ENCODE measurements at regions of chr5 and their contacts with region 1.

Region 1: DNA sequence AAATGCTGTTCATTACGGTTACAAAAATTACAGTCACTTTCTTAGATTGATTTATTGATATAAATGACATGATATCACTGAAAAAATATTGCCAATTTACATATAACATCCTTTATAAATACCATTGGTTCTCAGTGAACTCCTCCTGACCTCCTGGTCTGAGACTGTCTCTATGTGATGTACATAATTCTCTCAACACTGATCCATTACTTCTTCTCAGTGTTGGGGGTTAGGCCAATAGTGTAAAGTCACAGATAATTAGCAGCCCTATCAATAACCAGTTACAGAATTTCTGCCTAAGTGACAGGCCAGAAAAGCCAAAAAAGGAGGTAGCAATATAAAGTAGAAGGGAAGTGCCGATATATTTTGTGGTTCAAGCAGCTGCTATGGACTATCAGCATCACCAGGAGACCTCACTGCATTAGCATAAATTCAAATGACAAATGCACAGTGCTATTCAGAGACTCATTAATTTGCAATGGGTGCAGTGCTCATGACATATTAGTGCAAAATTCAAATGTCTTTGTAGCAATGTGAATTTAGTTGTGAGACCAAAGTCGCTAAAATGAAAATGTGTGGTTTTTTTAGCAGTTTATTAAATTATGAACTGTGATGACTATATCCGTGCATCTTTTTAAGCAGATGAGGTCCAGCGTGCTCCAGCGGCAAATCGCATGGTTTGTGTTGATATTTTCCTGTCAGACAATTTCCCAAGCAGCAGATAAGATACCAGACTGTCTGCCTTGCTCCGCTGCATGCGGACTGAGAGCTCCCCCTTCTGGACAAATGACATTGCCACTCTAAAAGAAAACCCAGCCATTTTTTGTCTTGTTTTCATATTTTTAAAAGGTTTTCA is 144.6 kb downstream of the CETN3 start:
- DNase-seq: peak; percentile 51 to 66 (median 59)
- ATAC-seq: peak in 3 of 4 donors; percentile 67 to 69 (median 68)
- H3K4me3 ChIP-seq: no peak overlapping the region
- H3K27ac ChIP-seq: peak overlapping the region in 1 of 12 donors; percentile 7
- H3K4me1 ChIP-seq: peaks cover 0 to 5% (median 0%) of the 10 kb centered on the region in 12 donors
- H3K27me3 ChIP-seq: no peaks in the 10 kb centered on the region
- CTCF ChIP-seq: peak; percentile 85 to 97 (median 92)
- POLR2A ChIP-seq: no peak

Region 2: DNA sequence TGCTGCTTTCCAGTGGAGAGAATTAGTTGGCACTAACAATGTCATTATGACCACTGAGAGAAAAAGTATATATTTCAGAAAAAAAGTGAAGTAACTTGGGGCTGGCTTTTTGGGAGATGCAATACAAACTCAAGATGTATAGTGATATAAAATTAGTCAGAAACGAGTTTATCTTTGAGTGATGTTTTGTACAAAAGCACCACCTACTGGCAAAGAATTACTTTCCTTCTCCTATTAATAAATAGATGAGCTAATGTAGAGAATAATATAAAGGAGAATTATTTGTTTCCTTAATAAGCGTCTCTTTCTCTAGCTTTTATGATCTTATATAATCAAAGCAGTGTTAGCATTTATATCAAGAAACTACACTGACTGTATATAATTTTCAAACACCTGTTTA is 1540.7 kb before region 1 on chr5:
- intact Hi-C with region 1: loop called in 9 of 10 experiments (anchors 1 to 10 kb)
- DNase-seq: no peak
- ATAC-seq: no peak
- H3K4me3 ChIP-seq: no peak overlapping the region
- H3K27ac ChIP-seq: no peak overlapping the region
- H3K4me1 ChIP-seq: peaks cover 0 to 9% (median 0%) of the 10 kb centered on the region in 12 donors
- H3K27me3 ChIP-seq: no peaks in the 10 kb centered on the region
- CTCF ChIP-seq: peak in 5 of 12 donors; percentile 13 to 34 (median 27)
- POLR2A ChIP-seq: no peak

Region 3: DNA sequence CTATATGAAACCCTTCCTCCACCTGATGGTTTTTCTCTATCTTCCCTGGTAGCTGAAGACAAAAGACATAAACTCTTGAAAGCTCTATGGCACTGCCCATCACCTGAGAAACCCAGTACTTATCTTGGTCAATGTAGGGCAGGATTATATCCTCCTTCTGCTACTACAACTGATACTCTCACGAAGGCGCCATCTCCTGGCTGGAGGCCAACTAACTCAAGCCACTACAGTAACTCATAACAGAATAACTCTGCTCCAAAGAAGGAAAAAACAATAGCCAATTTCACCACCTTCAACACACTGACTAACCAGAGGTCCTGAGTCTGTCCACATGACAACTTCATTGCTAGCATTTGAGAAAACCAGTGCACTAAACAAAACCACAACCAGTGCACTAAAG is 264.6 kb before region 1 on chr5:
- intact Hi-C with region 1: loop called in 2 of 10 experiments (anchors 10 kb)
- DNase-seq: no peak
- ATAC-seq: no peak
- H3K4me3 ChIP-seq: no peak overlapping the region
- H3K27ac ChIP-seq: no peak overlapping the region
- H3K4me1 ChIP-seq: peaks cover 0 to 5% (median 0%) of the 10 kb centered on the region in 12 donors
- H3K27me3 ChIP-seq: no peaks in the 10 kb centered on the region
- CTCF ChIP-seq: no peak
- POLR2A ChIP-seq: no peak

Measured in heart left ventricle (tissue), 16 donors.